HEK293 (cell line): ENCODE measurements at regions of chr11 and their contacts with region 1.

Region 1: GRCh38 chr11:72471005-72471898 is 36.9 kb upstream of the CLPB start:
- H3K4me3 ChIP-seq: no peak overlapping the region
- H3K27ac ChIP-seq: no peak overlapping the region
- H3K4me1 ChIP-seq: no peaks in the 10 kb centered on the region
- CTCF ChIP-seq: peak; percentile 67

Region 2: GRCh38 chr11:72446902-72447769 is 24.1 kb before region 1 on chr11:
- CTCF ChIA-PET with region 1: interaction called, 25 read pairs
- POLR2A ChIA-PET with region 1: no interaction called
- H3K4me3 ChIP-seq: no peak overlapping the region
- H3K27ac ChIP-seq: no peak overlapping the region
- H3K4me1 ChIP-seq: no peaks in the 10 kb centered on the region
- CTCF ChIP-seq: peak; percentile 42; the same call in 1 of the 2 replicates

Region 3: DNA sequence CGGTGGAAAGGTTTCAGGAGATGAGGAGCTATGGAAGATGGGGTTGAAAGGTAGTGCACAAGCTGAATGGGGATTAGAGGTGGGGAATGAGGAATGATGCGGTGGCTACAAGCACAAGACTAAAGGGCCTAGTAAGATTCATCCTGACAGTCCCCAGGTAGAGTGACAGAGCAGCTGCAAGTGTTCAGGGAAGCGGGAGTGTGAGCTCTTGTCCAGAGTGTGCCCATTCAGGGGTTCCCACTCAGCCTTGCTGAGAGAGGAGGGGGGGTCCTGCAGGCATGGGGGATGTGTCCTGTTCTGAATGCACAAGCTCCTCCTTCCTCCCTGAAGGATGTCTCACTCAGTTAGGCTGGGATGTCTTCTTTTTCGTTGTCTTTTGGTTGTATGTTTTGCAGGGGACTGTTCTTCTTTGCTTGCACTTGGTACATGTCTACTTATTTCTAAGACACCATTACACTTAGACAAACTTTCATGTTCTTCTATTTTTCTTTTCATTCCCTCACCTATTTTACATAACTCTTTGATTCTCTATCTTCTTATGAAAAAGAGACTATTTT is 11.1 kb before region 1 on chr11:
- CTCF ChIA-PET with region 1: interaction called, 25 read pairs
- POLR2A ChIA-PET with region 1: no interaction called
- H3K4me3 ChIP-seq: no peak overlapping the region
- H3K27ac ChIP-seq: no peak overlapping the region
- H3K4me1 ChIP-seq: no peaks in the 10 kb centered on the region
- CTCF ChIP-seq: no peak

Region 4: GRCh38 chr11:72497731-72498130 is 26.5 kb after region 1 on chr11:
- CTCF ChIA-PET with region 1: interaction called, 10 read pairs
- POLR2A ChIA-PET with region 1: no interaction called
- H3K4me3 ChIP-seq: no peak overlapping the region
- H3K27ac ChIP-seq: no peak overlapping the region
- H3K4me1 ChIP-seq: no peaks in the 10 kb centered on the region
- CTCF ChIP-seq: no peak

Region 5: DNA sequence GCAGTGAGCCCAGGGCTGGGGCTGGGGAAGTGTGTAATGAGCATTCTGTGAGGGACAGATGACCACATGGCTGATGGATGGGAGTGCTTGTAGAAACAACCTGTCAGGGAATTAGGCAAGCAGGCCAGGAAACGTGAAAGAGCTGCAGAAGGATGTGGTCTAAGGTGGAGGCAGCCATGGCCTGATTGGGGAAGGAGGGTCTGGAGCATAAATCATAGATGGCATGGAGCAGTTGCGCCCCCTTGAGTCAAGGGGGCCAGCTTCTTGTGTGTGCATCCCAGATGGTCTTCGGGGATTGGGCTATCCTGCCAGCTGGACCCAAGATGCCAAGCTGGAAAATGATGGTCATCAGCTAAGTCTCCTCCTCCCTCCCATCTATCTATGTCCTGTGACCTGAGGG is 82.5 kb after region 1 on chr11:
- CTCF ChIA-PET with region 1: interaction called, 20 read pairs
- POLR2A ChIA-PET with region 1: no interaction called
- H3K4me3 ChIP-seq: no peak overlapping the region
- H3K27ac ChIP-seq: no peak overlapping the region
- H3K4me1 ChIP-seq: no peaks in the 10 kb centered on the region
- CTCF ChIP-seq: no peak

Region 6: DNA sequence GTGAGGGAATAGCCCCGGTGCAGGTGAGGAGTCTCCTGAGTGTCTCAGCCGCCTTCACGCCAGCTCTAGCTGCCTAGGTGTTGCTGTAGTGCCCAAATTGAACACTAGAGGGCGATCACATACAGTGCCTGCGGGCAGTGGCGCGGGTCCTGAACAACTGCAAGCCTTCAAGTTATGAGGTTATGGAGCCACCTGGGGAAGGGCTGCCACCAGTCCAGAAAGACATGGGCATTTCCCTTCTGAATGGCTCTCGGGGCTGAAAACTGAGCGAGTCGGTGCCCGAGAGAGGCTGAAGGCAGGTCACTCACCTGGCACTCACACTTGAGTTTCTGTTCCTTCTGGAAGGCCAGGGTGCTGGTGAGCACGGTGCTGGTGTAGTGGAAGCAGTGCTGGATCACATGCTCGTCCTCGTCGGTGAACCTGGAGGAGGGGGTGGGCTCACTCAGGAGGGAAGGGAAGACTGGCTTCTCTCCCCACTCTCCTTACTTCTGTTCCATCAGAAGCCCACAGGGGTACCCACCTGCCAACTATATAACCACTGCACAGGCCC is 114.6 kb after region 1 on chr11:
- CTCF ChIA-PET with region 1: interaction called, 30 read pairs
- POLR2A ChIA-PET with region 1: no interaction called
- H3K4me3 ChIP-seq: no peak overlapping the region
- H3K27ac ChIP-seq: no peak overlapping the region
- H3K4me1 ChIP-seq: no peaks in the 10 kb centered on the region
- CTCF ChIP-seq: peak; percentile 61

Region 7: DNA sequence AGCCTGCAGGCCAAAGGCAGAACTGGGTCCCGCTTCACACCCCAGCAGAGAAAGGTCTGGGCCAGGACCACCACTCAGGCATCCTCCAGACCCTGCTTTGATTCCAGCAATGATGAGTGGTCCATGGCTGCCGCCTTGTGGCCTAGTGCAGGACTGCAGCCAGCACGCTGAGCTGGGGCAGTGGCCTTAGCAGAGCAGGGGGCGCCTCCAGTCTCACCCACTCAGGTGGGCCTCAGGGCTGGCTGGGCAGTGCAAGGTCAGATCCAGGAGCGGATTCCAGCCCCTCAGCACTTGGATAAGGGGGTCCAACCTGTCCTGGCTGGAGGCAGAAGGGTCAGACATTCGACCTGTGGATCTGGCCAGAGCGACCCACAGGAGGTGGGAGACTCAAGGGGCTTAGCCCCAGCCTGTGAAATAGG is 212.5 kb after region 1 on chr11:
- CTCF ChIA-PET with region 1: interaction called, 38 read pairs
- POLR2A ChIA-PET with region 1: no interaction called
- H3K4me3 ChIP-seq: no peak overlapping the region
- H3K27ac ChIP-seq: no peak overlapping the region
- H3K4me1 ChIP-seq: no peaks in the 10 kb centered on the region
- CTCF ChIP-seq: peak; percentile 79